CD4-positive, alpha-beta memory T cell (primary cell): ENCODE measurements at regions of chr19 and their contacts with region 1.

Region 1: DNA sequence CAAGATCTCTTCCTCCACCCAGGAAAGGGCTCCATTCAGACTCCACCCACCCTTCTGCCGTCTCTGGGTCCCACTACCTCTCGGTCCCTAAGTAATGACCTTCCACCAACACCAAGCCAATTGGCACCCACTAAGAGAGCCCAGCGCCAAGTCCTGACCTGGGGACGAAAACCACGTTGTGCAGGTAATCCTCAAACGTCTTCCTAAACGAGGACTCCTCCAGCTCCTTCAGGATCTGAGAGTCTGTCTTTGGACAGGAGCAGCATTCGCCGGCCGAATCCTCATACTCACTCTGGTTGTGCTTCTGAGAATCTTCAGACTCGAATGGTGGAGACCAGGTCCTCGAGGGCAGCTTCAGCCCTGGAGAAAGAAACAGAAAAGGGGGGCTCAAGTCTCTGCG is 83.1 kb downstream of the ZNF557 start:
- DNase-seq: no peak
- H3K4me3 ChIP-seq: no peak overlapping the region
- H3K4me3 Mint-ChIP-seq: peak overlapping the region in 1 of 8 donors; percentile 52
- H3K27ac ChIP-seq: no peak overlapping the region
- H3K27ac Mint-ChIP-seq: peak overlapping the region in 1 of 7 donors; percentile 57
- H3K4me1 ChIP-seq: no peaks in the 10 kb centered on the region
- H3K4me1 Mint-ChIP-seq: peaks cover 0 to 2% (median under 1%) of the 10 kb centered on the region in 4 donors
- H3K27me3 ChIP-seq: no peaks in the 10 kb centered on the region
- H3K27me3 Mint-ChIP-seq: peaks cover 0 to 1% of the 10 kb centered on the region in 2 donors

Region 2: DNA sequence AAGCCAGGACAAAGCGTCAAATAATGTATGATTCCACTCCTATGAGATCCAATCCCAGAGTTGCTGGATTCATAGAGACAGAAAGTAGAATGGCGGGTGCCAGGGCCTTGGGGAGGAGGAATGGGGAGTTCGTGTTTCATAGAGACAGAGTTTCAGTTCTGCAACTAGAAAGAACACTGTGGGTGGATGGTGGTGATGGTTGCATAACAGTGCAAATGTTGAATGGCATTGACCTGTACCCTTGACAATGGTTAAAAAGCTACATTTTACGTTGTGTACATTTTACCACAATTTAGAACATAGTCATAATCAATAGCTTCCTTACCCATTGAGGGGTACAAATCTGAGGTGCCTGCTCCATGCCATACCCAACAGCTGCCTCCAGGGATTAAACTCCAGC is 164.7 kb before region 1 on chr19:
- CTCF ChIA-PET with region 1: no interaction called
- POLR2A ChIA-PET with region 1: no interaction called
- intact Hi-C with region 1: no loop called
- DNase-seq: no peak
- H3K4me3 ChIP-seq: no peak overlapping the region
- H3K4me3 Mint-ChIP-seq: no peak overlapping the region
- H3K27ac ChIP-seq: no peak overlapping the region
- H3K27ac Mint-ChIP-seq: peak overlapping the region in 1 of 7 donors; percentile 31
- H3K4me1 ChIP-seq: no peaks in the 10 kb centered on the region
- H3K4me1 Mint-ChIP-seq: no peaks in the 10 kb centered on the region
- H3K27me3 ChIP-seq: no peaks in the 10 kb centered on the region
- H3K27me3 Mint-ChIP-seq: peaks cover 0 to 2% of the 10 kb centered on the region in 2 donors

Region 3: GRCh38 chr19:7137120-7137519 is 15.4 kb before region 1 on chr19:
- CTCF ChIA-PET with region 1: interaction called, 15 read pairs
- POLR2A ChIA-PET with region 1: no interaction called
- intact Hi-C with region 1: no loop called
- DNase-seq: no peak
- H3K4me3 ChIP-seq: no peak overlapping the region
- H3K4me3 Mint-ChIP-seq: no peak overlapping the region
- H3K27ac ChIP-seq: no peak overlapping the region
- H3K27ac Mint-ChIP-seq: no peak overlapping the region
- H3K4me1 ChIP-seq: no peaks in the 10 kb centered on the region
- H3K4me1 Mint-ChIP-seq: no peaks in the 10 kb centered on the region
- H3K27me3 ChIP-seq: no peaks in the 10 kb centered on the region
- H3K27me3 Mint-ChIP-seq: peaks cover 0 to 2% of the 10 kb centered on the region in 2 donors

Region 4: GRCh38 chr19:7257148-7258034 is 104.8 kb after region 1 on chr19:
- CTCF ChIA-PET with region 1: no interaction called
- POLR2A ChIA-PET with region 1: no interaction called
- intact Hi-C with region 1: no loop called
- DNase-seq: no peak
- H3K4me3 ChIP-seq: no peak overlapping the region
- H3K4me3 Mint-ChIP-seq: no peak overlapping the region
- H3K27ac ChIP-seq: no peak overlapping the region
- H3K27ac Mint-ChIP-seq: no peak overlapping the region
- H3K4me1 ChIP-seq: no peaks in the 10 kb centered on the region
- H3K4me1 Mint-ChIP-seq: no peaks in the 10 kb centered on the region
- H3K27me3 ChIP-seq: no peaks in the 10 kb centered on the region
- H3K27me3 Mint-ChIP-seq: no peaks in the 10 kb centered on the region

Region 5: DNA sequence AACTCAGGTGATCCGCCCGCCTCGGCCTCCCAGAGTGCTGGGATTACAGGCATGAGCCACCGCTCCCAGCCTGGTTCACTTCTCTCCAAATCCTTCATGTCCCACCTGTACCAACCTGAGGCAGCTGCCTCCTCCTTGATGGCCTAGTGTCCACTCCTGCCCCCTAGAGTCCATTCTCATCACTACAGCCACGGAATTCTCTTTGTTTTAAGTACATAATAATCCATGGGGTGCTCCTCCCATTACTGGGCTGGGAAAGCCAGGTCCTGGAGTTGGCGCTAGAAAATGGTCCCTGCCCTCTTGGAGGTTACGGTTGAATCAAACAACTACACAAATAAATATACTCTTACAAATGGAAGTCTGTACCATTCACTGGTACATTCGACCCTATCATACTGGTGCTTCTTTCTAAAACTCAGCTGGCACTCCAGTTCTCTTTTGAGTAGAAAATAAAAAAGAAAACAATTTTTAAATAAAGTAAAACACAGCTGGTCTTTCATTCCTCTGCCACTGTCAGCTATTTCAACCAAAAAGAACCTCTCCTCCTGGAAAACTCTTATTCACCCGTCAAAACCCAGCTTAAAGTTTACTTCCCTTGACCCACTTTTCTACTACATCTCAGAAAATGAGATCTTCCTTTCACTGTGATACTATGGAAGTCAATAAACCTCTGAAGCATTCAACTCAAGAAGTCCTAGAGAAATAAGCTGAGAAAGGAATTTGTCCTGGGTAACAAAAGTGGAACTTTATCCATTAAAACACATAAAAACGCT is 173.7 kb after region 1 on chr19:
- CTCF ChIA-PET with region 1: interaction called, 12 read pairs
- POLR2A ChIA-PET with region 1: no interaction called
- intact Hi-C with region 1: no loop called
- DNase-seq: peak in 2 of 5 donors; percentile 24 to 37
- H3K4me3 ChIP-seq: no peak overlapping the region
- H3K4me3 Mint-ChIP-seq: no peak overlapping the region
- H3K27ac ChIP-seq: no peak overlapping the region
- H3K27ac Mint-ChIP-seq: no peak overlapping the region
- H3K4me1 ChIP-seq: no peaks in the 10 kb centered on the region
- H3K4me1 Mint-ChIP-seq: no peaks in the 10 kb centered on the region
- H3K27me3 ChIP-seq: no peaks in the 10 kb centered on the region
- H3K27me3 Mint-ChIP-seq: peaks cover 1 to 2% of the 10 kb centered on the region in 2 donors

Region 6: GRCh38 chr19:7340959-7341837 is 188.6 kb after region 1 on chr19:
- CTCF ChIA-PET with region 1: interaction called, 40 read pairs
- POLR2A ChIA-PET with region 1: interaction called, 4 read pairs
- intact Hi-C with region 1: no loop called
- DNase-seq: peak; percentile 70 to 81 (median 79)
- H3K4me3 ChIP-seq: no peak overlapping the region
- H3K4me3 Mint-ChIP-seq: peak overlapping the region in 6 of 8 donors; percentile 17 to 72 (median 66)
- H3K27ac ChIP-seq: no peak overlapping the region
- H3K27ac Mint-ChIP-seq: peak overlapping the region; percentile 54 to 92 (median 85)
- H3K4me1 ChIP-seq: peaks cover 67% of the 10 kb centered on the region
- H3K4me1 Mint-ChIP-seq: peaks cover 44 to 65% (median 50%) of the 10 kb centered on the region in 4 donors
- H3K27me3 ChIP-seq: no peaks in the 10 kb centered on the region
- H3K27me3 Mint-ChIP-seq: no peaks in the 10 kb centered on the region

Region 7: DNA sequence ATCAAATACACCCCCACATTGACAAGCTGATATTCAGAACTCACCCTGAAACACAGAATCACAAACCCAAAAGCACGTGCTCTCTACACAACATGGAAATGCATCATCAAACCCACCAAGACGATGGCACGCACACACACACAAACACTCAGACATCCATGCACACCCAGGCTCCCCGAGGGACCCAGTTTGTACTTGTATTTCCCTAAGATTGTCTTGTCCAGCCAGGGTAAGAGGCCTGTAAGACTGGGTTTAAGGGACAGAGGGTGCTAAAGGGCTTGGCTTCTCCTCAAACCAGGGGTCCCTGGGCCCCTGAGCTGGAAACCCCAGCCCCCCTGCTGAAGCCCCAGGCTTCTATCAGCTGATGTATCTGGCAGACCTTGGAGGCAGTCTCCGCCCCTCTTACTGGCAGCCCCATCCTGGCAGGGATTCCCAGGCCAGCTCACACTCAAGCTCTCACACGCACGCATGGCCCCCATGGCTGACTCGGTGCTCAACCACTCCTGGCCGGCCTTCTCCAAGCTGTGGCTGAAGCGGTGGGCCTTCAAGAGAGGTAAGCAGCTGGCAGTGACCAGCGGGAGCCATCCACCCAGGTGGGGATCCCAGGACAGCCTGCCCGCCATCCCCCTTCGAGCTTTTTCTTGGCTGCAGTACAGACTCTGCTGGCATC is 202.7 kb after region 1 on chr19:
- CTCF ChIA-PET with region 1: interaction called, 12 read pairs
- POLR2A ChIA-PET with region 1: no interaction called
- intact Hi-C with region 1: no loop called
- DNase-seq: no peak
- H3K4me3 ChIP-seq: no peak overlapping the region
- H3K4me3 Mint-ChIP-seq: peak overlapping the region in 3 of 8 donors; percentile 4 to 94 (median 82)
- H3K27ac ChIP-seq: peak overlapping the region; percentile 35
- H3K27ac Mint-ChIP-seq: peak overlapping the region in 5 of 7 donors; percentile 37 to 95 (median 83)
- H3K4me1 ChIP-seq: peaks cover 83% of the 10 kb centered on the region
- H3K4me1 Mint-ChIP-seq: peaks cover 54 to 95% (median 68%) of the 10 kb centered on the region in 4 donors
- H3K27me3 ChIP-seq: no peaks in the 10 kb centered on the region
- H3K27me3 Mint-ChIP-seq: no peaks in the 10 kb centered on the region

Region 8: GRCh38 chr19:7376151-7376852 is 223.7 kb after region 1 on chr19:
- CTCF ChIA-PET with region 1: no interaction called
- POLR2A ChIA-PET with region 1: no interaction called
- intact Hi-C with region 1: loop called (anchors 1 kb)
- DNase-seq: no peak
- H3K4me3 ChIP-seq: no peak overlapping the region
- H3K4me3 Mint-ChIP-seq: no peak overlapping the region
- H3K27ac ChIP-seq: no peak overlapping the region
- H3K27ac Mint-ChIP-seq: peak overlapping the region in 1 of 7 donors; percentile 64
- H3K4me1 ChIP-seq: peaks cover 4% of the 10 kb centered on the region
- H3K4me1 Mint-ChIP-seq: peaks cover 6 to 24% (median 7%) of the 10 kb centered on the region in 4 donors
- H3K27me3 ChIP-seq: no peaks in the 10 kb centered on the region
- H3K27me3 Mint-ChIP-seq: no peaks in the 10 kb centered on the region